Activated CD8-positive, alpha-beta T cell treated with anti-CD3 and anti-CD28 coated beads, Interleukin-2, amount 10 ng/mL, durations not matched to agents 7 days and 5 days (primary cell): ENCODE measurements at regions of chrX and their contacts with region 1.

Region 1: GRCh38 chrX:13487731-13488523 is 81.5 kb upstream of the EGFL6 start:
- DNase-seq: peak; percentile 62
- ATAC-seq: peak; percentile 84
- H3K4me3 Mint-ChIP-seq: no peak overlapping the region
- H3K27ac Mint-ChIP-seq: peak overlapping the region; percentile 76
- H3K4me1 Mint-ChIP-seq: peaks cover 41% of the 10 kb centered on the region
- H3K27me3 Mint-ChIP-seq: no peaks in the 10 kb centered on the region

Region 2: DNA sequence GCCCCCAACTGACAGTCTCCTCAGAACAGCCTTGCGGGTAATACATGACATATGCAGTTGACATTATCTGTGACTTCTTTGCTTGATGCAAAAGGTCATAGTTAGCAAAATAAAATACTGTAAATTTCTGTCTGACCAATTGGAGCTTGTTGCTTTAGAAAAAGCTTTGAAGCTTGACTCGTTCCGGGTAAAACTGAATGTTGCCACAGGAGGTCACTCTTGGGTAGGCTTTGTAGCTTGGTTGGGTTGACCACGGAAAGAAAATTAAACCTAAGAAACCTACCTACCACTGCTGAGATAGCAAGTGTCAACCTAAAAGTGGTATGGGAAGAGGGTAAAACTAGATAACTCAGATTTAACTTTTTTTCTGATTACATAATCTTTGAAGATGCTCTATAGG is 673.5 kb before region 1 on chrX:
- CTCF ChIA-PET with region 1: interaction called, 13 read pairs
- POLR2A ChIA-PET with region 1: no interaction called
- DNase-seq: peak; percentile 68
- ATAC-seq: peak; percentile 47
- H3K4me3 Mint-ChIP-seq: no peak overlapping the region
- H3K27ac Mint-ChIP-seq: no peak overlapping the region
- H3K4me1 Mint-ChIP-seq: peaks cover 34% of the 10 kb centered on the region
- H3K27me3 Mint-ChIP-seq: no peaks in the 10 kb centered on the region

Region 3: DNA sequence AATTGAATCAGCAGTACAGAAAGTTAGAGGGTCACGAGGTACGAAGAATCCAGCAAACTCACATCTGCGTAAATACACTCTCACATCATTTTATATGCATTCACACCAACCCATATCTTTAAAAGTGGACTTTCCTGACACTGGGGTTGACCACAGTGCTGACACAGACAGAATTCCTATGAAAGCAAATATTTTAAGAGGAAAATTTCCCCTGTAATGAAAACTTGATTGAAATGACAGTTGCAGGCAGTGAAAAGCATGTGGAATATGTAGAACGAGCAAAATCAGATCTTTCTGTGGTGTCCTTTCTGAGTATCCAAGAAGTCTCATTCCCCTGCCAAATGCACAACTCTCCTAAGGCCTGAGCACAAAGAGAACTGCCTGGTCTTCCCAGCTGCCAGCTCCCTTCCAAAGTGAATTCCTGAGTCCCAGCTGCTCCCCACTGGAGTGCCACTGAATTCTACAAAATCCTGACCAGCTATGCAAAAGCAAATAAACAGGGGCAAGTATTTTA is 393.0 kb before region 1 on chrX:
- CTCF ChIA-PET with region 1: interaction called, 53 read pairs
- POLR2A ChIA-PET with region 1: interaction called, 5 read pairs
- DNase-seq: no peak
- ATAC-seq: no peak
- H3K4me3 Mint-ChIP-seq: no peak overlapping the region
- H3K27ac Mint-ChIP-seq: peak overlapping the region; percentile 57
- H3K4me1 Mint-ChIP-seq: peaks cover 88% of the 10 kb centered on the region
- H3K27me3 Mint-ChIP-seq: no peaks in the 10 kb centered on the region

Region 4: GRCh38 chrX:13473442-13474163 is 14.3 kb before region 1 on chrX:
- CTCF ChIA-PET with region 1: interaction called, 11 read pairs
- POLR2A ChIA-PET with region 1: interaction called, 3 read pairs
- DNase-seq: peak; percentile 23
- ATAC-seq: peak; percentile 60
- H3K4me3 Mint-ChIP-seq: peak overlapping the region; percentile 60
- H3K27ac Mint-ChIP-seq: peak overlapping the region; percentile 80
- H3K4me1 Mint-ChIP-seq: peaks cover 25% of the 10 kb centered on the region
- H3K27me3 Mint-ChIP-seq: no peaks in the 10 kb centered on the region